ENCODE measurements at regions of chr2 and their contacts with region 1.

Region 1: GRCh38 chr2:8681786-8682692 is at the start of gene ID2:
- DNase-seq: peak; percentile 98
- H3K4me3 ChIP-seq: peak within 1 kb of the TSS; percentile 52 to 75 (median 70)
- H3K27ac ChIP-seq: peak within 1 kb of the TSS; percentile 74 to 96 (median 92)
- H3K4me1 ChIP-seq: peaks cover 17 to 79% (median 61%) of the 10 kb centered on the region in 6 donors
- H3K27me3 ChIP-seq: peaks cover 0 to 80% (median 20%) of the 10 kb centered on the region in 7 donors
- CTCF ChIP-seq: peak in 2 of 11 experiments; percentile 13 to 26
- POLR2A ChIP-seq: peak; percentile 95 to 99 (median 99)
- total RNA-seq, gene ID2: 80.4 to 343 (median 109) TPM

Region 2: DNA sequence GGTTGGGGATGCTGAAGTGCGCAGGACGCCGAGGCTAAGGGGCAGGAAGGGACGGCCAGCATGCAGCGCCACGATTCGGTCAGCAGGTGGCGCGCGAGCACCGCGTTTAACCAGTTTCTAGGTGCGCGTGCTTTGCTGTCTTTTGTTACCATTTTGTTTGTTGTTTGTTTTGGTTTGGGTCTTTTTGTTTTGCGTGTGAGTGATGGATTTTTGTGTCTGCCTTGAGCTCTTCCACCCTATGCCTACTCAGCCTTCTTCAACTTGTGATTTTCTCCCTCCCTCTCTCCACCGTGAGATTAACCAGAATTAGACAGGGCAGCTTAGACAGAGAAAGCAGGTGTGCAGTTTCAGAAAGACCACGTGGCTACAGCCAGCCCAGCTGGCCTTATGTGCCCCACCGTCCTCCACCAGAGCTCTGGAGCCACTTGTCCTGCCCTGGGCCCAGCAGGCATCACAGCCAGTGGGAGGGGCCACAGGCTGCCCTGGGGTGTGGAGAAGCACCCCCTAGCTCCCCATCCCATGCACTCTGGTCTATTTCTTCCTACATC is 1584.6 kb before region 1 on chr2:
- intact Hi-C with region 1: loop called (anchors 5 kb)
- DNase-seq: peak; percentile 95
- H3K4me3 ChIP-seq: peak overlapping the region in 1 of 8 donors; percentile 27
- H3K27ac ChIP-seq: no peak overlapping the region
- H3K4me1 ChIP-seq: peaks cover 0 to 11% (median 9%) of the 10 kb centered on the region in 6 donors
- H3K27me3 ChIP-seq: peaks cover 0 to 11% (median 0%) of the 10 kb centered on the region in 7 donors
- CTCF ChIP-seq: peak; percentile 93 to 99 (median 99)
- POLR2A ChIP-seq: no peak

Region 3: DNA sequence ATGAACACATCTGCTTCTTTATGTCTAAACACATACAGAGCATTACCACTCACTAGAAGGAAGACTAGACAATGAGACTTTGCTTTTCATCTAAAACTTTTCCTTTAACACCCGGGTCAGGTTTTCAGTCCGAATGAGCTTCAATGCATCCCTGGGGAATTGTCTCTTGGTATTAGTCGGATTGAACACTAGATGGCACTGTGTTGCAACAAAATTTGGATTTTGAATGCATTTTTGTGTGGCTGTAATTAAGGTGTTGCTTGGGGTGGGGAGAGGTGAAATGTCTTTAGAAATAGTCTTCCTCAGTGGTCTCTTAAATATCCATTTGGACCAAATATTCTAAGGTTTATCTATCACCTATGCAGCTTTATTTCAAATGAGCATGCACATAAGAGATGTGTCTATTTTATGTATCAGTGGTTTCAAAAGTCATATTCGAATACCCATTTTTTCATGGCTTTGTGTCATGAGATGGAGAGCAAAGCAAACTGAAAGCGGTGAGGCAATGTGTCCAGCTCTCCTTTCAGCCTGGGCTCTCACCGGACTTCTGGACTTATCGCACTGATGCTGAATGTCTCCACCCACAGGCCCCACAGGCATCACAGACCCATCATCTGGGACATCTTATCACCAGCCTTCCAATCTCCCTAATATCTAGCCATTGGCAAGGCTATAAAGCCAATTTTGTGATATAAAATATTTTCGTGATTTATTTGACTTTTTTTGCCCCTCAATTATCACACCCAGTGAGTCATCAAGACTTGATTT is 1254.6 kb before region 1 on chr2:
- intact Hi-C with region 1: loop called (anchors 5 kb)
- DNase-seq: no peak
- H3K4me3 ChIP-seq: no peak overlapping the region
- H3K27ac ChIP-seq: peak overlapping the region in 2 of 8 donors; percentile 3 to 36
- H3K4me1 ChIP-seq: peaks cover 5 to 56% (median 27%) of the 10 kb centered on the region in 6 donors
- H3K27me3 ChIP-seq: peaks cover 0 to 44% (median 0%) of the 10 kb centered on the region in 7 donors
- CTCF ChIP-seq: peak; percentile 50 to 87 (median 78)
- POLR2A ChIP-seq: no peak

Region 4: GRCh38 chr2:8285081-8285480 is 397.0 kb before region 1 on chr2:
- intact Hi-C with region 1: no loop called
- DNase-seq: no peak
- H3K4me3 ChIP-seq: no peak overlapping the region
- H3K27ac ChIP-seq: no peak overlapping the region
- H3K4me1 ChIP-seq: peaks cover 0 to 5% (median 0%) of the 10 kb centered on the region in 6 donors
- H3K27me3 ChIP-seq: peaks cover 0 to 14% (median 0%) of the 10 kb centered on the region in 7 donors
- CTCF ChIP-seq: peak in 3 of 11 experiments; percentile 8 to 23 (median 20)
- POLR2A ChIP-seq: no peak

Region 5: DNA sequence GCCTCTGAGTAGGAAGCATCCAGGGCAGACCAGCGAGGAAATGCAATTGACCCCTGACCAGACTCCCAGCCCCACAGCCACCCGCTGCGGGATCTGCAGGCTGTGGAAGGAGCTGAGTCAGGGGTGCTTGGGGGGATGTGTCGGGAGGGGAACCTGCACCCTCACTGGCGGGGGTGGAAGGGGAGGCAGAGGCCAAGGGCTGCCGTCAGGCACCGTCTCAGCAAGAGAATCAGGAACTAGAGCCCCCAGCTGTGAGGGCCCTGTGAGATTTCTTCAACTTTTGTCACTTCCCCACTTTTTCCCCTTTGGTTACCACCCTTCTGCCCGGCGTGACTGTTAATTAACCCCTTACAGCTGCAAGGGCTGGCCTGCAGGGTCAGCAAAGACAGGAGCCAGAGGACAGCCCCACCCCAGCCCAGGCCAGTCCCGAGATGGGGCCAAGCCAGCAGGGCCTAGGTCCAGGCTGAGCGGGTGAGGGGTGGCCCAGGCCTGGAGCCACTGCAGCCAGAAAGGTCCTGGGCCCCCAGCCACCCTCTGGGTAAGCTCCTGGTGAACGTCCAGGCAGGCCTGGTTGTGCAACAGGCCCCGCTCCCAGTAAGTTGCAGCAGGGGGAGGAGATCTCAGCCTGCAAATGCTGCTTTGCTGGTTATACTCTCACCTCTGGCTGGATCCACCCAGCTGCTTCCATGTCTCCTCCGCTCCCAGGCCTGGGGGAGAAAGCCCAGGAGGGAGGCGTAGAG is 147.1 kb before region 1 on chr2:
- intact Hi-C with region 1: no loop called
- DNase-seq: peak; percentile 91
- H3K4me3 ChIP-seq: peak overlapping the region in 1 of 8 donors; percentile 19
- H3K27ac ChIP-seq: peak overlapping the region; percentile 66 to 83 (median 72)
- H3K4me1 ChIP-seq: peaks cover 22 to 64% (median 54%) of the 10 kb centered on the region in 6 donors
- H3K27me3 ChIP-seq: peaks cover 0 to 47% (median 0%) of the 10 kb centered on the region in 7 donors
- CTCF ChIP-seq: no peak
- POLR2A ChIP-seq: no peak

Measured in spleen (tissue), 13 donors.